Activated naive CD4-positive, alpha-beta T cell treated with anti-CD3 and anti-CD28 coated beads for 36 hours (primary cell): ENCODE measurements at regions of chr19 and their contacts with region 1.

Region 1: DNA sequence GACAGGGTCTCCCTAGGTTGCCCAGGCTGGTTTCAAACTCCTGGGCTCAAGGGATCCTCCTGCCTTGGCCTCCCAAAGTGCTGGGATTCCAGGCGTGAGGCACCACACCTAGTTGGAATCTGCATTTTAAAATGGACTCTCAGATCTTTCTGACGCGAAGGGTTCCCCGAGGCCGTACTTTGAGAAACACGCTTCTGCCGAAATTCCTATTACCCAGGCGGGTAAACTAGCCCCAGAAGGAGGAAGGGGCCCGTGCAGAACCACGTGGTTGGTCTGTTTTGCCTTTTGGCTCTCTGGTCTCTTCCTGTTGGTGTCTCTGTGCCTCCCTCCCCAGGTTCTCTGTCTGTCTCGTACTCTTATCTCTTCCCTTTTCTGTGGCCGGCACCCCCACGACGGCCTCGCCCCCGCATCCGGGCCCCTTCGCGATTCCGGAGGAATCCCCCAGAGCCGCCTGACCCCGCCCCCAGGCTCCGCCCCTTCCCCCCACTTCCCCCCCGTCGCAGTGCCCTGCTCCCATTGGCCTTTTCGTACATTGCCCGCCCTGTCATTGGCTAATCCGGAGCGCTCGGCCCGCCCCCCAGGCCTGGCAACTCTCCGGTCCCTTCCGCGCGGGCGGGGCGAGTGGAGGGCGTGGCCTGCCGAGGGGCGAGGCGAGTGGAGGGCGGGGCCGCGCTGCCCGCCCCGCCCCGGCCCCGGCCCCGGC is at the start of gene TNFAIP8L1:
- DNase-seq: peak; percentile 99
- H3K4me3 Mint-ChIP-seq: peak within 1 kb of the TSS; percentile 80
- H3K27ac Mint-ChIP-seq: peak within 1 kb of the TSS; percentile 91
- H3K4me1 Mint-ChIP-seq: peaks cover 35% of the 10 kb centered on the region
- H3K27me3 Mint-ChIP-seq: no peaks in the 10 kb centered on the region
- total RNA-seq, gene TNFAIP8L1: 19.9 to 20.4 TPM

Region 2: GRCh38 chr19:4149518-4150288 is 489.3 kb before region 1 on chr19:
- CTCF ChIA-PET with region 1: no interaction called
- intact Hi-C with region 1: no loop called
- DNase-seq: no peak
- H3K4me3 Mint-ChIP-seq: no peak overlapping the region
- H3K27ac Mint-ChIP-seq: no peak overlapping the region
- H3K4me1 Mint-ChIP-seq: no peaks in the 10 kb centered on the region
- H3K27me3 Mint-ChIP-seq: peaks cover 6% of the 10 kb centered on the region

Region 3: DNA sequence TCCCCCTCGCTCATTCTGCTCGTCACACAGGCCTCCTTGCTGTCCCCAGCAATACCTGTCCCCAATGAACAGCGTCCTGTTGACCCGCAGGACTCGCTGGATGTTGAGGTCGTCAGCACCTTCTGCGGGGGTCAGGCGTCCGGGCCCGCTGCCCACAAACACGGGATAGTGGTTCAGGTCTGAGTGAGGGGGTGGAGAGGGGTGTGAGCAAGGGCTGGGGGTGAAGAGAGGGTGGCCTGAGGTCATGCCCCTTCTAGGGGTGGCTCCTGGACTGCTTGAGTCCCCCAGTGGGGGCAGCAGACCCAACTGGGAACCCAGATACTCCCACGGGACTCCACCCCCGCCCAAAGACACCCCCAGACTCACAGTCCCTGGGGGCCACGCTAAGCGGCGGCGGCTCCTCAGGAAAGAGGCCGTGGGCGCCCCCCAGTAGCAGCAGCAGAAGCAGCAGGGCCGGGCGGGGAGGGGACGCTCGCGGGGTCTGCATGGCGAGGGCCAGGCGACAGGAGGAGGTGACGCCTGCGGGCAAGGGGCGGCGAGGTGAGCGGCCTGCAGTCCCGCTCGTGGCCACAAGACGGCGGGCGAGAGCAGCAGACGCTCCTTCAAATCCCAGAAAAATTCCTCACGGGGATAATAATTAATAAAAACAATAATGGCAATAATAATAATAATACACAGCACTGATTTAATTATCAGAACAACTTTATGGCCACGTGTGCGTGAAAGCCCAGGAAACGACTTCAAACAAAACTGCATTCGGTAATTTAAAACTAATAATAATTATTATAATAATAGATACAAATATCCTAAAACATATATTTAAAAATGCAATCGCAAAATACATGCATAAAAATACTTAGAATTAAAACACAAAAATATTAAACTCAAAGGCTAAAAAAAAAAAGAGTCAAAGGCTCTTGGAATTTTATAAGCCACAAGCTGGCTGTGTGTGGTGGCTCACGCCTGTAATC is 80.7 kb before region 1 on chr19:
- CTCF ChIA-PET with region 1: interaction called, 11 read pairs
- intact Hi-C with region 1: no loop called
- DNase-seq: peak; percentile 37
- H3K4me3 Mint-ChIP-seq: no peak overlapping the region
- H3K27ac Mint-ChIP-seq: no peak overlapping the region
- H3K4me1 Mint-ChIP-seq: no peaks in the 10 kb centered on the region
- H3K27me3 Mint-ChIP-seq: no peaks in the 10 kb centered on the region

Region 4: GRCh38 chr19:4576016-4576933 is 62.7 kb before region 1 on chr19:
- CTCF ChIA-PET with region 1: interaction called, 70 read pairs
- intact Hi-C with region 1: loop called (anchors 1 kb)
- DNase-seq: peak; percentile 87
- H3K4me3 Mint-ChIP-seq: no peak overlapping the region
- H3K27ac Mint-ChIP-seq: no peak overlapping the region
- H3K4me1 Mint-ChIP-seq: peaks cover 11% of the 10 kb centered on the region
- H3K27me3 Mint-ChIP-seq: peaks cover 40% of the 10 kb centered on the region

Region 5: DNA sequence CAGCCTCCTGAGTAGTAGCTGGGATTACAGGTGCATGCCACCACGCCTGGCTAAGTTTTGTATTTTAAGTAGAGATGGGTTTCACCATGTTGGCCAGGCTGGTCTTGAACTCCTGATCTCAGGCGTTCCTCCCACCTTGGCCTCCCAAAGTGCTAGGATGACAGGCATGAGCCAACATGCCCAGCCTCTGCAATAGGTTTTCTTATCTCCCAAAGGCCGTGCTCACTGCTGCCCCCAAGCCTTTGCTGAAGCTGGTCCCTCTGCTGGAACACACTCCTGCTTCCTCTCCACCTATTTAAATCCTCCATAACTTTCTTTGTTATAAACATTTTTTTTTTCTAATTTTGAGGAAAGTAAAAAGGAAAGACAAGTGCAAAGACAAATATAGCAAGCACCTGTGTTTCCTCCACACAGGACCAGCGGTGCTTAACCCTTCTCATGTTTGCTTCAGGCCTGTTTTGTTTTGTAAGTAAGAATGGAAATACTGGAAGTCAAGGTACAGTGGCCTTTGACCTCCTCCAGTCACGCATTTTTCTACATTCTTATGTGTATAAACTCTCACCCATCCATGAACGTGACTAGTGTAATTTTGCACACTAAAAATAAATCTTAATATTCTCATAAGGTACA is 14.1 kb before region 1 on chr19:
- CTCF ChIA-PET with region 1: interaction called, 20 read pairs
- intact Hi-C with region 1: no loop called
- DNase-seq: no peak
- H3K4me3 Mint-ChIP-seq: no peak overlapping the region
- H3K27ac Mint-ChIP-seq: no peak overlapping the region
- H3K4me1 Mint-ChIP-seq: no peaks in the 10 kb centered on the region
- H3K27me3 Mint-ChIP-seq: peaks cover 7% of the 10 kb centered on the region

Region 6: GRCh38 chr19:4700497-4700970 is 61.6 kb after region 1 on chr19:
- CTCF ChIA-PET with region 1: no interaction called
- intact Hi-C with region 1: no loop called
- DNase-seq: no peak
- H3K4me3 Mint-ChIP-seq: no peak overlapping the region
- H3K27ac Mint-ChIP-seq: no peak overlapping the region
- H3K4me1 Mint-ChIP-seq: no peaks in the 10 kb centered on the region
- H3K27me3 Mint-ChIP-seq: no peaks in the 10 kb centered on the region

Region 7: DNA sequence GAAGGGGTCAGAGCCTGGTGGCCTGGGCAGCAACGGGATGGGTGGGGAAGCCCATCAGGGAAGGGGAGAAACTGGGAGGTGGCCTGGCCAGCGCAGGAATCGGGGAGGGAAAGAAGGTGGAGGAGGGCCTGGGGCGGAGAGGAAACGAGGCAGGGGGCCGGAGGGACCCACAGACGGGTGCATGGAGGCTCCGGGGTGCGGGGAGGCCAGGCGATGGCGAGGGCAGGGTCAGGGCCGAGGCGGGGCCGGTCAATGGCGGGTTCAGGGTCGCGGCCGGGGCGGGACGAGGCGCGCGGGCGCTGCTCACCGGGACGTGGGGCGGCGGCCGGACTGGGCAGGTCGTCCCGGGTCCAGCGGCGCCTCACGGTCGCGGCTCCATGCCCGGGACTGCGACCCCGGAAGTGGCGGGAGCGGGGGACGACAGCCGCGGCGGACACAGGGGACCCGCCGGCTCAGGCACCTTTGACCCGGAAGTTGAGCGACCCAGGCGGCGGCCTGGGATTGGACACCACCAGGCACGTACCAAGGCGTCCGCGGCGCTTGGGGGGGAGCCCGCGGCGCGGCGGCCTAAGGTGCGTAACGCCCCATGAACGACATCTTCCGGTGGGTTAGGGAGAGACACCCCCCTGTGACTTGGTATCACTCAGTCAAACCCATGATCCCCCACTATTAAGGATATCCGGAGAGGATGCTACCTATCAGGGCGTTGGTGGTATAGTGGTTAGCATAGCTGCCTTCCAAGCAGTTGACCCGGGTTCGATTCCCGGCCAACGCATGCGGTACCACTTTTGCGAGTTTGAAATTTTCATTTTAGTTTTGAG is 84.6 kb after region 1 on chr19 and contains the start of gene DPP9:
- CTCF ChIA-PET with region 1: interaction called, 5 read pairs
- intact Hi-C with region 1: loop called (anchors 1 kb)
- DNase-seq: peak; percentile 98
- H3K4me3 Mint-ChIP-seq: peak within 1 kb of the TSS; percentile 91
- H3K27ac Mint-ChIP-seq: peak within 1 kb of the TSS; percentile 97
- H3K4me1 Mint-ChIP-seq: peaks cover 22% of the 10 kb centered on the region
- H3K27me3 Mint-ChIP-seq: peaks cover 3% of the 10 kb centered on the region
- total RNA-seq, gene DPP9: 40.8 to 41.9 TPM